GM12878 (cell line): ENCODE measurements at regions of chr19 and their contacts with region 1.

Region 1: GRCh38 chr19:7522072-7522922 is at the start of gene MCOLN1:
- DNase-seq: peak; percentile 91
- ATAC-seq: peak; percentile 96
- H3K4me3 ChIP-seq: peak within 1 kb of the TSS; percentile 76
- H3K27ac ChIP-seq: no peak within 1 kb of the TSS
- H3K4me1 ChIP-seq: peaks cover 4% of the 10 kb centered on the region; the same call in 1 of the 2 replicates
- H3K27me3 ChIP-seq: no peaks in the 10 kb centered on the region
- CTCF ChIP-seq: no peak
- EP300 ChIP-seq: peak; percentile 17 to 68; a peak in 1 of 4 replicates
- POLR2A ChIP-seq: peak; percentile 85
- RAD21 ChIP-seq: no peak
- polyA plus RNA-seq, gene MCOLN1: 0.42 to 1.4 TPM

Region 2: GRCh38 chr19:7535035-7535992 is 13.0 kb after region 1 on chr19 and contains the start of gene PNPLA6:
- CTCF ChIA-PET with region 1: interaction called, 5 read pairs
- POLR2A ChIA-PET with region 1: interaction called, 28 read pairs
- RAD21 ChIA-PET with region 1: interaction called, 6 read pairs
- SMC1A ChIA-PET with region 1: interaction called, 10 read pairs
- in situ Hi-C with region 1: no loop called
- intact Hi-C with region 1: no loop called
- DNase-seq: peak; percentile 67
- ATAC-seq: peak; percentile 86
- H3K4me3 ChIP-seq: peak within 1 kb of the TSS; percentile 93
- H3K27ac ChIP-seq: peak within 1 kb of the TSS; percentile 45
- H3K4me1 ChIP-seq: peaks cover 4% of the 10 kb centered on the region
- H3K27me3 ChIP-seq: no peaks in the 10 kb centered on the region
- CTCF ChIP-seq: no peak
- EP300 ChIP-seq: no peak
- POLR2A ChIP-seq: peak; percentile 62
- RAD21 ChIP-seq: no peak
- polyA plus RNA-seq, gene PNPLA6: 0.95 to 8.4 TPM